PC-3 (cell line): ENCODE measurements at regions of chr7 and their contacts with region 1.

Region 1: GRCh38 chr7:139133335-139134139 is 24.0 kb upstream of the ZC3HAV1 start:
- DNase-seq: peak; percentile 89
- ATAC-seq: peak; percentile 98
- H3K4me3 ChIP-seq: peak overlapping the region; percentile 79
- H3K27ac ChIP-seq: no peak overlapping the region
- H3K4me1 ChIP-seq: peaks cover 4% of the 10 kb centered on the region; the same call in 1 of the 2 replicates
- H3K27me3 ChIP-seq: no peaks in the 10 kb centered on the region
- CTCF ChIP-seq: no peak

Region 2: GRCh38 chr7:139109188-139109982 is 24.2 kb before region 1 on chr7 and contains the start of gene ZC3HAV1:
- CTCF ChIA-PET with region 1: no interaction called
- POLR2A ChIA-PET with region 1: interaction called, 4 read pairs
- intact Hi-C with region 1: loop called (anchors 1 kb)
- DNase-seq: peak; percentile 71
- ATAC-seq: peak; percentile 81
- H3K4me3 ChIP-seq: peak within 1 kb of the TSS; percentile 96
- H3K27ac ChIP-seq: peak within 1 kb of the TSS; percentile 66
- H3K4me1 ChIP-seq: peaks cover 31% of the 10 kb centered on the region
- H3K27me3 ChIP-seq: no peaks in the 10 kb centered on the region
- CTCF ChIP-seq: no peak
- total RNA-seq, gene ZC3HAV1: 19.6 and 25.0 TPM in 2 replicates

Region 3: DNA sequence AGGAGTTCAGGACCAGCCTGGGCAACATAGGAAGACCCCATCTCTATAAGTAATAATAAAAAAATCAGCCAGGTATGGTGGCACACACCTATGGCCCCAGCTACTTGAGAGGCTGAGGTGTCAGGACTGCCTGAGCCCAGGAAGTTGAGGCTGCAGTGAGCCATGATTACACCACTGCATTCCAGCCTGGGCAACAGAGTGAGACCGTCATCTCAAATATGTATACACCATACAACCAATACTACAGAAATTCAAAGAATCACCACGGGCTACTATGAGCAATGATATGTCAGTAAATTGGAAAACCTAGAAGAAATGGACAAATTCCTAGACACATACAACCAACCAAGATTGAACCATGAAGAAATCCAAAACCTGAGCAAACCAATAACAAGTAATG is 36.3 kb after region 1 on chr7:
- CTCF ChIA-PET with region 1: no interaction called
- POLR2A ChIA-PET with region 1: interaction called, 10 read pairs
- intact Hi-C with region 1: no loop called
- DNase-seq: no peak
- ATAC-seq: no peak
- H3K4me3 ChIP-seq: no peak overlapping the region
- H3K27ac ChIP-seq: no peak overlapping the region
- H3K4me1 ChIP-seq: no peaks in the 10 kb centered on the region
- H3K27me3 ChIP-seq: no peaks in the 10 kb centered on the region
- CTCF ChIP-seq: no peak

Region 4: DNA sequence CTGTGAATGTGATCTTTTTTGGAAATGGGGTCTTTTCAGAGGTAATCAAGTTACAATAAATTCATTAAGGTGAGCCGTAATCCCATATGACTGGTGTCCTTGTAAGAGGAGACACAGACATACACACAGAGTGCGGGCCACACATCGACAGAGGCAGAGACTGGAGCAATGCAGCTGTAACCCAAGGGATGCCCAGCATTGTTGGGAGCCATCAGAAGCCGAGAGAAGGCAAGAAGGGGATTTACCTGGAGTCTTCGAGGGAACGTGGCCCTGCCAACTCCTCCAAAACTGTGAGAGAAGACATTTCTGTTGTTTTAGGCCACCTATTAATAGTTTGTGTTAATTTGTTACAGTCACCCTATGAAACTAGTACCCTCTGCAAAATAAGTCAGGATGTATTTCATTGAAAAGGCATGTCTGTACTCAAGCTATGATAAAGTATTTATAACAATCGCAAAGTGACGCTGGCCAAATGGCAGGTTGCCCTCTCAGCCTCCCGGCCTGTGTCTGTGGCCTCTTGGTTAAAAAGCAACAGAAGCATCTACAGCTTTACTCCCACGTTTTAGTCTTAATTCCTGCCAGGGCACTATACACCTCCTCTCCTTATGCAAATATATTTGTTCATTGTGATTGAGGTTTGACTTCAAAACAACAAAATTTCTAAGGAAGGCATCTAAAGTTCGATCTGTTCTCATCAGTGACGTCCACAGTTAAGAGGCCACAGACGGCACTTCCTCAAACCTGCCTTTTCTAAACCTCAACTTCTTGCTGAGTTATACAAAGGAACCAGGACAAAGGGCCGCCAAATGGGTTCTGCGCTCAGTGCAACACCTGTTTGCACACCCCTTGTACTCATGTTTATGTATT is 597.4 kb after region 1 on chr7:
- CTCF ChIA-PET with region 1: no interaction called
- POLR2A ChIA-PET with region 1: no interaction called
- intact Hi-C with region 1: no loop called
- DNase-seq: peak; percentile 17
- ATAC-seq: no peak
- H3K4me3 ChIP-seq: peak overlapping the region; percentile 53
- H3K27ac ChIP-seq: peak overlapping the region; percentile 83
- H3K4me1 ChIP-seq: peaks cover 57% of the 10 kb centered on the region
- H3K27me3 ChIP-seq: no peaks in the 10 kb centered on the region
- CTCF ChIP-seq: no peak